ENCODE measurements at regions of chr11 and their contacts with region 1.

Region 1: DNA sequence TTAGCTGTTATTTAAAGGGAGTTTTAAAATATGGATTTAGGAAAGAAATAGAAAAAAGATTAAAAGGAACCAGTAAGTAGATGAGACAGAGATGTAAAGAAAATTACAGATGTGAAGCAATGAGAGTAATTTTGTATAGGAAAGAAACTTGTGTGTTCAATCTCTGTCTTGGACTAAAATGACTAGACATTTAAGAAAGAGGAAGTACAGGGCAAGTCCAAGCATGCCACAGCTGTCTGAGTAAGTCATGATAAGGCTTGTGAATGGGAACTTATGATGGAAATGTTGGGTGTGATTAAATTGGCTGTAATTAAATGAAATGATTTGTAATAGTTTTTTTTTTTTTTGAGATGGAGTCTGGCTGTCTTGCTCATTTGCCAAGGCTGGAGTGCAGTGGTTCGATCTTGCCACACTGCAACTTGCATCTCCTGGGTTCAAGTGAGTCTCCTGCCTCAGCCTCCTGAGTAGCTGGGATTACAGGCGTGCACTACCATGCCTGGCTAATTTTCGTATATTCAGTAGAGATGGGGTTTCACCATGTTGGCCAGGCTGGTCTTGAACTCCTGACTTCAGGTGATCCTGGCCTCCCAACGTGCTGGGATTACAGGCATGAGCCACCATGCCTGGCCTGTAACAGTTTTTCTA is 5.9 kb upstream of the ACY3 start:
- DNase-seq: peak; percentile 37
- ATAC-seq: no peak
- H3K4me3 ChIP-seq: no peak overlapping the region
- H3K4me3 Mint-ChIP-seq: no peak overlapping the region
- H3K27ac ChIP-seq: no peak overlapping the region
- H3K27ac Mint-ChIP-seq: no peak overlapping the region
- H3K4me1 ChIP-seq: peaks cover 8 to 11% of the 10 kb centered on the region in 2 donors
- H3K4me1 Mint-ChIP-seq: peaks cover 11% of the 10 kb centered on the region
- H3K27me3 ChIP-seq: no peaks in the 10 kb centered on the region
- H3K27me3 Mint-ChIP-seq: no peaks in the 10 kb centered on the region
- CTCF ChIP-seq: no peak

Region 2: DNA sequence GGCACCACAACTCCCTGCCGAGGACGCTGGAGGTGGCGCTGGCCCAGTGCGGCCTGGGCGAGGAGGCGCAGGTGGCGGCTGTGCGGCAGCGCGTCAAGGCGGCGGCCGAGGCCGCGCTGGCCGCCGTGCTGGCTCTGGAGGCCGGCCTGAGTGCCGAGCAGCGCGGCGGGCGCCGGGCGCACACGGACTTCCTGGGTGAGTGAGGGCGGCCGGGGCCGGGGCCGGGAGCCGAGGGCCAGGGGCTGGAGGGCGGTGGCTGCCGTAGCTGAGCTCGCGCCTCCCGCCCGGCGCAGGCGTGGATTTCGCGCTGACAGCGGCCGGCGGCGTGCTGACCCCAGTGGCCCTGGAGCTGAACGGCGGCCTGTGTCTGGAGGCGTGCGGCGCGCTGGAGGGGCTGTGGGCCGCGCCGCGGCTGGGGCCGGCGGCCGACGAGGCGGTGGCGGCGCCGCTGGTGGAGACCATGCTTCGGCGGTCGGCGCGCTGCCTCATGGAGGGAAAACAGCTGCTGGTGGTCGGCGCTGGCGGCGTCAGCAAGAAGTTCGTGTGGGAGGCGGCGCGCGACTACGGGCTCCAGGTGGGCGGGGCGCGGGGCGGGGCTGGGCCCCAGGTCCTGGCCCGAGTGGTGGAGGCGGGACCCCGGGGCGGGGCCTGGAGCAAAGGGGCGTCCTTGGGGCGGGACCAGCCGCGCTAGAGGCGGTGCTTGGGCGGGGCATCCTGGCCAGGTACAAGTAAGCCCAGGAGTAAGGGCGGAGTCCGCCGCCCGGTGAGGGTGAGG is 235.6 kb before region 1 on chr11:
- CTCF ChIA-PET with region 1: no interaction called
- POLR2A ChIA-PET with region 1: no interaction called
- intact Hi-C with region 1: no loop called
- DNase-seq: peak; percentile 98
- ATAC-seq: peak; percentile 85
- H3K4me3 ChIP-seq: peak overlapping the region in 4 of 5 experiments; percentile 32 to 63 (median 53)
- H3K4me3 Mint-ChIP-seq: peak overlapping the region; percentile 83
- H3K27ac ChIP-seq: peak overlapping the region; percentile 43 to 71
- H3K27ac Mint-ChIP-seq: peak overlapping the region; percentile 91
- H3K4me1 ChIP-seq: peaks cover 49 to 54% of the 10 kb centered on the region in 2 donors
- H3K4me1 Mint-ChIP-seq: peaks cover 50% of the 10 kb centered on the region
- H3K27me3 ChIP-seq: no peaks in the 10 kb centered on the region
- H3K27me3 Mint-ChIP-seq: no peaks in the 10 kb centered on the region
- CTCF ChIP-seq: no peak

Region 3: DNA sequence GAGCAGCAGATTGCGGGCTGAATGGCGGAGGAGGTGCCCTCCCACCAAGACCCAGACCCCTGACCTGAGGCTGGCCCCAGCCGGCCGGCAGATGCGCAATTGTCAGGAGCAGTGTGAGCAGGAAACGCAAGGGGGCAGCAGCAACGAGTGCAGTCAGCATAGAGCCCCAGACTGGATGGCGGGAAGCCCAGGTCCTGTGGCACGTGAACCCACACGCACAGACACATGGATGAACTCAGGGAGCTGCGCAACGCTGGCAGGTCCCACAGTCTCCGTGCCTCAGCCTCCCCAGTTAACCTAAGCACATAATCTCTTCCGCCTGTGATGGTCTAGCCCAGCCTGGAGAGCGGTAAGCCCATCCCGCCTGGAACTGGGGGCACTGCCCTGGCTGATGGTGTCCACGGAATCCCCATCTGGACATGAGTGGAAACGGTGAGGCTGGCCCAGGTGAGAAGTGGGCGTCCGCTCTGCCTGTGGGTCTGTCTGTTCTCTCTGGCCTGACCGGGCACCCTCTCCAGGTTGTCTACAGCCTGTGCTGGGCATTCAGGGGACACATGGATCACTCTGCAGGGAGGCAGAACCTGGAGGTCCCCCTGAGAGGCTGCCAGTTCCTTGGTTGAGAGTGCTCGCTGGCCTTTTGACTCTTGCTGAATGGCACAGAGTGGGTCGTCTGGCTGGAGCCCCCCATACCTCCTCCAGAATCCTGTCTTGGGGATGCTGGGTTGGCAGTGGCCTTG is 16.2 kb before region 1 on chr11:
- CTCF ChIA-PET with region 1: interaction called, 149 read pairs
- POLR2A ChIA-PET with region 1: no interaction called
- intact Hi-C with region 1: loop called (anchors 1 kb)
- DNase-seq: peak; percentile 76
- ATAC-seq: peak; percentile 84
- H3K4me3 ChIP-seq: no peak overlapping the region
- H3K4me3 Mint-ChIP-seq: no peak overlapping the region
- H3K27ac ChIP-seq: no peak overlapping the region
- H3K27ac Mint-ChIP-seq: no peak overlapping the region
- H3K4me1 ChIP-seq: peaks cover 16 to 20% of the 10 kb centered on the region in 2 donors
- H3K4me1 Mint-ChIP-seq: peaks cover 18% of the 10 kb centered on the region
- H3K27me3 ChIP-seq: peaks cover 0 to 18% (median 3%) of the 10 kb centered on the region in 4 experiments
- H3K27me3 Mint-ChIP-seq: peaks cover 4% of the 10 kb centered on the region
- CTCF ChIP-seq: peak; percentile 67

Measured in B cell (primary cell).